ENCODE measurements at regions of chr1 and their contacts with region 1.

Region 1: GRCh38 chr1:163071405-163072255 is 2.5 kb downstream of the RGS4 start:
- DNase-seq: peak; percentile 39
- H3K4me3 ChIP-seq: peak overlapping the region; percentile 57
- H3K27ac ChIP-seq: no peak overlapping the region
- H3K4me1 ChIP-seq: peaks cover 13% of the 10 kb centered on the region
- H3K27me3 ChIP-seq: peaks cover 42% of the 10 kb centered on the region
- CTCF ChIP-seq: peak; percentile 74

Region 2: GRCh38 chr1:162663589-162664106 is 408.0 kb before region 1 on chr1:
- intact Hi-C with region 1: no loop called
- DNase-seq: no peak
- H3K4me3 ChIP-seq: no peak overlapping the region
- H3K27ac ChIP-seq: peak overlapping the region; percentile 6
- H3K4me1 ChIP-seq: peaks cover 25% of the 10 kb centered on the region
- H3K27me3 ChIP-seq: no peaks in the 10 kb centered on the region
- CTCF ChIP-seq: no peak

Region 3: DNA sequence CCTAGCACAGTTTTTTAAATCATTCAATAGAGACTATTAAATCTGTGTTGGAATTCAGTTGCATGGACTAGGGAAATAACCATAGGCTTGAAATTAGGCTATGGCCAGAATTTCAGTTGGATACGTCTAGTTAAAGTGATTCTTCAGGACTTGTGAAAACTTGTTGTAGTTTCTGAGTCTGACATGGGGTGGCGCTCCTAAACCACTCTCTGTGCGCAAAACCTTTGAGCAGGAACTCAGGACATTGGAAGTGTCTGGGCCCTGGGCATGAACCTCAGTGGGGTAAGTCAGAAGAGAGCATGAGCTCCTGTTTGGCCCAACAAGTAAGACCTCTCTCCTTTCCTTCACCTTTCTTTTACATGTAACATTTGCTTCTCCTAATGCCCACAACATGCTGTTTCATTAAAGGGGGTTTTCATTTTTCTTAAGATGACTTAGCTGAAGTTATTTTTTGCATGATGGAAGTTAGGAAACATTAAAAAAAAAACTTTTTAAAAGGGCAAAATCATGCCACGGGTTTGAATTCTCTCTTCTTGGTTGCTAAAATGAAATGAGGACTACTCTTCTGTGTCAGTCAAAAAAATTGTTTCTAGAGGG is 193.5 kb before region 1 on chr1:
- intact Hi-C with region 1: loop called (anchors 10 kb)
- DNase-seq: peak; percentile 22
- H3K4me3 ChIP-seq: no peak overlapping the region
- H3K27ac ChIP-seq: no peak overlapping the region
- H3K4me1 ChIP-seq: no peaks in the 10 kb centered on the region
- H3K27me3 ChIP-seq: peaks cover 25% of the 10 kb centered on the region
- CTCF ChIP-seq: peak; percentile 79

Region 4: DNA sequence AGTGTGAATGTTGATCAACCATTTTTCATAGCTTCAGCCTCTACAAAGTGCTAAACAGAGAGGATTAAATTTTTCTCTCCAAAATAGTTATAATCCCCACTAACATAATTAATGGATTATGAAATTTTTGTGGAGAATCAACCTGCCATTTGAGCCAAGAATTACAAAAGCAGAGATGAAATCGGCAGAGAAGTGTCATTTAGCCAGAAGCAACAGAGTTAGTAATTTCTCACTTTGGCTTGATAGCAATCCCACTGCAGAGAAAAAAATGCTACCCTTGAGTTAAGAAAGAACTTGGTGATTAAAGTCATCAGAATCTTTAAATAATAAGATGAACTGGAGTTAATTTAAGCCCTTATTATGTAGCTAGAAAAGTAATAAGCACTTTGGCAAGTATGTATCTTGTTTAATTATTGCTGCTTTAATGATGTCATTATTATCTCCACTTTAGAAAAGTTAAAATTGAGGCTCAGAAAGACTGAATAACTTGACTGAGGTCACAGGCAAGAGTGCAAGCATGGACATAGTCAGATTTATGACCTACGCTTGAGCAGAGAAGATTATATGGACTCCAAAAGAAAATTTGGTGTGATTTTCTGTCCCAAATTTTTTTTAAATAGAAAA is 34.8 kb after region 1 on chr1:
- intact Hi-C with region 1: no loop called
- DNase-seq: no peak
- H3K4me3 ChIP-seq: no peak overlapping the region
- H3K27ac ChIP-seq: no peak overlapping the region
- H3K4me1 ChIP-seq: no peaks in the 10 kb centered on the region
- H3K27me3 ChIP-seq: no peaks in the 10 kb centered on the region
- CTCF ChIP-seq: no peak

Region 5: DNA sequence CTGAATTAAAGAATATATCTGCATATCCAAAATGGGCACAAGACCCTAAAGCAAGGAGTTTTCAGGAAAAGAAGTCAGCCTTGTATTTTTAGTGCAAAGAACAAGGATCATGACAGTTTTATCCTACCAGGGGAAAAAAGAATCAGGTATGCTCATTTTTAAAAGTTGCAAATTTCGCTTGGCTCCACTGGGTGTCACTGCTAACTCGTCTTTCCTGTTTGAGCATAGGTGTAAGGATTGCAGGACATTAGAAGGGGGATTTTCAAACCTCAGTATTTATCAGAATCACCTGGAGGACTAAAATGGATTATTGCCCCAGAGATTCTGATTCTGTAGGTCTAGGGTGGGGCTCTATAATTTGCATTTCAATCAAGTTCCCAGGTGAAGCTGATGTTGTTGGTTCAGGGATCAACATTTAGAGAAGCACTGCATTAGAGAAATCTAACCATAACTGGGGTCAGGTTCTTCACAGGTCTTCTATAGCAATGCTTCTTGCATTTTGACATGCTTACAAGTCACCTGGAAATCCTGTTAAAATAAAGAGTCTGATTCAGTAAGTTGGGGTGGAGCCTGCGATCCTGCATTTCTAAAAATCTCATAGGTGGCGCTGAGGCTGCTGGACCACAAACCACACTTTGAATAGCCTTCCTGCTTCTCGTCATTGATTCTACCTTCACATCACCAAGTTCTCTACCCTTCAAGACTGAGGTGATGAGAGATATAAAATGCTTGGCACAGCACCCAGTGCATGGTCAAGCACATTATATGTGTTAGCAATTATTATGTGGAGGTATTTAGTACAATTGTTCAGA is 289.7 kb after region 1 on chr1:
- intact Hi-C with region 1: no loop called
- DNase-seq: no peak
- H3K4me3 ChIP-seq: no peak overlapping the region
- H3K27ac ChIP-seq: no peak overlapping the region
- H3K4me1 ChIP-seq: peaks cover 4% of the 10 kb centered on the region
- H3K27me3 ChIP-seq: no peaks in the 10 kb centered on the region
- CTCF ChIP-seq: peak; percentile 33

Region 6: DNA sequence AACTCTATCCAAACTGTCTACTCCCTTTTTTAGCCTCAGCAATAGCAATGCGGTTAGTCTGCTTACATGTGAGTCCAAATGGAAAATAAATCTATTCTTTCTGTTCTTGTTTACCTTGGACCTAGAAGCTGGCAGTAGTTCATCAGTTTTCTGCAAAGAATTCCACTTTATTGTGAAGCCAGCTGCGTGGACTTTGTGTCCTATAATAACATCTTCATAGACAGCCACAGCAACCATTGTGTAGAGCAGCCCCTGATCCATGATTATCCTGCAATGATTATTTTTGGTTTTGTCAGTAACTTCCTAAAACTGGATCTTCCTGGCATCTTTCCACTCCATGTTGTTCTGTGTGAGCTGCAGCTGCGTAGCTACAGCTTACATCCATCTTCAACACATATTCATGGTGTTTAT is 658.8 kb after region 1 on chr1:
- intact Hi-C with region 1: no loop called
- DNase-seq: no peak
- H3K4me3 ChIP-seq: no peak overlapping the region
- H3K27ac ChIP-seq: no peak overlapping the region
- H3K4me1 ChIP-seq: no peaks in the 10 kb centered on the region
- H3K27me3 ChIP-seq: no peaks in the 10 kb centered on the region
- CTCF ChIP-seq: no peak

Measured in left ventricle myocardium inferior (tissue), 1 donor.